PC-9 (cell line): ENCODE measurements at regions of chr16 and their contacts with region 1.

Region 1: DNA sequence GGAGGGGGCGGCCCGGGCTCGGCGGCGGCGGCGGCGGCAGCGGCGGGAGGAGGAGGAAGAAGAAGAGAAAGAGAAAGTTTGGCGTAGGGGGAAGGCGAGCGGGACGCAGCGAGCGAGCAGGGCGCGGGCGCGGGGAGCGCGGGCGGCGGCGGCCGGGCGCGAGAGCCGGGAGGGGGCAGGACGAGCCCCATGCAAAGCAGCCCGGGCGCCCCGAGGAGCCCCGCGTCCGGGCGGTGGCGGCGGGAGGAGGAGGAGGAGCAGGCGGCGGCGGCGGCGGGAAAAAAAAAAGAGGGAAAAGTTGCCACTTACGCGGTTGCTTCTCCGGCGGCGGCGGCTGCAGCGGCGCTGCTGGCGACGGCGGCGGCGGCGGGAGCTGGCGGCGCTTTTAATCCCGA is 10.3 kb upstream of the ZFHX3 start:
- DNase-seq: peak in 1 of 2 experiments; percentile 64
- H3K4me3 ChIP-seq: peak overlapping the region; percentile 91; the same call in 1 of the 2 replicates
- H3K27ac ChIP-seq: 0 out of 2 replicates have a peak overlapping the region, but pooled peaks have one; percentile 36
- H3K4me1 ChIP-seq: peaks cover 50% of the 10 kb centered on the region
- H3K27me3 ChIP-seq: no peaks in the 10 kb centered on the region
- CTCF ChIP-seq: no peak

Region 2: DNA sequence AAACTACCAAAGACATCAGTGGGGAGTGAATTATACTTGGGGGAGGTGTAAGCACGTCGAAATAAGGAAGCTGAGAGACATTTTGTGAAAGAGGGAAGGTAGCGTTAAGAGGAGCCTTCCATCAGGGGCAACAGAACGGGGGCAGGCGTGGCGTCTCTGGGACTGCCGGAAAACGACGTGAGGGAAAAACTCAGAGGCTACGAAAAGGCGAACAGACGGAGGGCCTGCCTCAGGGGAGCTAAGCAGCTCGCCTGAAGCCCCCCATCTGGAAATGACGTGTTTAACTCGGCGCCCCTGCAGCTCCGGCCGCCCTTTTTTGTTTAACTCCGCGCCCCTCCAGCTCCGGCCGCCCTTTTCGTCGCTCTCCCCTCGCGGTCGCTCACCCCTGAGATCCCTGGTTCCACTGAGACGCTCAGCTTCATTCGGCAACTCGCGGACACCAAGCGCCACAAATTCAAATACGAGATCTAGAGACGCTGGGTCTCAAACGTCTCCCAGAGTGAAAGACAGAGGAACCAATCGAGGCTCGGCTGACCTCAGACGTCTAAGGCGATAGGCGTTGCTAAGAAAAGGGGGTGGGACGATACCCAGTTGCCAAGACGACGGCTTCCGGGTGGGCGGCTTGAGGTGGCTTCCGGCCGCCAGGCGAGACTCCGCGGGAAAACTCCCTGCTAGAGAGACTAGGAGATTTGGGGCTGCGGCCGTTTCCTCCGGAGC is 393.6 kb before region 1 on chr16:
- CTCF ChIA-PET with region 1: no interaction called
- POLR2A ChIA-PET with region 1: no interaction called
- intact Hi-C with region 1: loop called (anchors 10 kb)
- DNase-seq: peak; percentile 91 to 95
- H3K4me3 ChIP-seq: peak overlapping the region; percentile 91
- H3K27ac ChIP-seq: no peak overlapping the region
- H3K4me1 ChIP-seq: peaks cover 15% of the 10 kb centered on the region
- H3K27me3 ChIP-seq: no peaks in the 10 kb centered on the region
- CTCF ChIP-seq: no peak

Region 3: DNA sequence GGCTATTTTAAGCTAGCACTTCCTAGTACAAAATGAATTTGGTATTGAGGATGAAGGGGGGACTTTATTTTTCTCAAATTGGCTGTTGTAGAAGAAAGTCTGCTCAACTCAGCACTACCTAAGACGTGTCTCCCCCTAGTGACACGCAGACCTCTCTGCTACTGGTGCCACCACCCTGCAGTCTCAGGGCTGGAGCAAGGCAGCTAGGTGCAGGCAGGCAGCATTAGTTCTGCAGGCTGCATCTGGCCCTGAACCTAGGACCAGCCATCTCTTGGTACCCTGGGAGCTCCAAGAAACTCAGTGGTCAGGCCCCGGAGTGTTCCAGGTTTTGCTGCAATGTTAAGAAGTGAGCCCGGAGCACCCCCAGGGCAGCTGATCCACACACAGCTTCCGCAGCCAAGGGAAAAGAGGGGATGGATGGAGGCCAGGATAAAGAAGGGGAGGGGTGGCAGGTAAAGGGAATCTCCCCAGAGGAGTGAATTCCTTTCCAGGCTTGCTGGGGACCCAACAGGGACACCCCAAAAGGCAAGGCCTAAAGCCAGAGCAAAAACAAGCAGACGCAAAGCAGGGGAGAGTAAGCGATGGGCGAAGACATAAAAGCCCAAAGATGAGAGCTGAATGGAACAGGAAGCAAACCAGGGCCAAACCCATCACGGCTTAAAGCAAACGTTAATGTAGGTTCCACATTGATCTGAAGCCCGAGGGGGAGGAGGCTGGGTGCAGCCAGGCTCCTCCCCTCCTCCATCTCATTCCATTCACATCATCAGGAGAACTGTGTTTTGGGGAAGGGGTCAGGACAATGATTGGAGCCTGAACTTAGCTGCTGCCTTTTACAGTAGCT is 210.8 kb before region 1 on chr16:
- CTCF ChIA-PET with region 1: no interaction called
- POLR2A ChIA-PET with region 1: no interaction called
- intact Hi-C with region 1: loop called (anchors 2 kb)
- DNase-seq: peak in 1 of 2 experiments; percentile 12
- H3K4me3 ChIP-seq: no peak overlapping the region
- H3K27ac ChIP-seq: no peak overlapping the region
- H3K4me1 ChIP-seq: peaks cover 19% of the 10 kb centered on the region
- H3K27me3 ChIP-seq: no peaks in the 10 kb centered on the region
- CTCF ChIP-seq: peak; percentile 47; the same call in 1 of the 2 replicates

Region 4: DNA sequence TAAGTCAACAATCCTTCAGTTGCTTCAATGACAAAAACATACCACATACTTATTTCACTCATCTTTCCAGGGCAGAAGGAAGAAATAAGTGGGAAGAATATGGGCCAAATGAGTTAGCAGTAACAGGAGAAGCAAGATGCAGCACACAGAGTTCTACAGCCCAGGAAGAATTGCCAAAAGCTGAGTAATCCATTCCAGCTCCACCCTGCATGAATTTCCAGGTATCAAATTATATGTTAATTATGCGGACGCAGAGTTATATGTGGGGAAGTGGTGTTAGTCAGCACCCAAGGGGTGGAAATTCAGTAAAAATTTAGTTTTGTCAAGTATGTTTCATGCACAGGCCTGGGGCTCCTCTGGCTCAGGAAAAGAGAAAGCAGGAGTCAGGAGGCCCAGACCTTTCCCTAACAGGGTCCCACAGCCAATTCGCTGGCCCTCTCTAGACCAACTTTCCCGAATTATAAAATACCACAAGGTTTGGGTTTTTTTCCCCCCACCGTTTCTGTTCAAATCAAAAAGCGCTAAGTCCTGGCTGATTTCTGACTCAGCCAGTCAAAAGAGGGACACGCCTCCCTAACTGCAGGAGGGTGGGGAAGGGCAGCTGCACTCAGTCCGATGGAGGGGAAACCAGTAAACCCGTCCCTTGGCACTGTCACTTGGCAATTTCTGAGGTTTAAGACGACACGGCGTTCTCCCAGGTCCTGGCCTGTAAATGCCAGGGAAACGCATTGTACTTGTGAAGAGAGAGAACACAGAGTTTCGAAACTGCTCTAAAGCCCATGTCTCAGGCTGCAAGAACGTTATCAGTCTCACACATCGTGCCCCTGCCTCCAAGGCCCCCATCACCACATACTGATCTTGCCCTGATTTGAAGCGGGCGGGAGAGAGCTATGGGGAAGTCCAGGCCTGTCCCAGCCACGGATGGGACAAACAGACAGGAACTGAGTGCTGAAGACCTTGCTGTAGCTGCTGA is 68.4 kb before region 1 on chr16:
- CTCF ChIA-PET with region 1: interaction called, 5 read pairs
- POLR2A ChIA-PET with region 1: interaction called, 6 read pairs
- intact Hi-C with region 1: loop called (anchors 1 kb)
- DNase-seq: peak; percentile 84 to 98
- H3K4me3 ChIP-seq: peak overlapping the region; percentile 46
- H3K27ac ChIP-seq: peak overlapping the region; percentile 99
- H3K4me1 ChIP-seq: peaks cover 78% of the 10 kb centered on the region
- H3K27me3 ChIP-seq: no peaks in the 10 kb centered on the region
- CTCF ChIP-seq: no peak

Region 5: GRCh38 chr16:73015612-73016487 is 42.4 kb before region 1 on chr16:
- CTCF ChIA-PET with region 1: no interaction called
- POLR2A ChIA-PET with region 1: interaction called, 5 read pairs
- intact Hi-C with region 1: loop called (anchors 1 kb)
- DNase-seq: peak; percentile 94 to 96
- H3K4me3 ChIP-seq: no peak overlapping the region; the same call in 1 of the 2 replicates
- H3K27ac ChIP-seq: peak overlapping the region; percentile 49
- H3K4me1 ChIP-seq: peaks cover 70% of the 10 kb centered on the region
- H3K27me3 ChIP-seq: no peaks in the 10 kb centered on the region
- CTCF ChIP-seq: no peak